Psoas muscle (tissue), 8 donors: ENCODE measurements at regions of chr3 and their contacts with region 1.

Region 1: GRCh38 chr3:160754855-160755747 is 930 bp upstream of the PPM1L start:
- DNase-seq: peak; percentile 94 to 96
- ATAC-seq: peak; percentile 85 to 94 (median 91)
- H3K4me3 ChIP-seq: peak overlapping the region; percentile 89
- H3K27ac ChIP-seq: peak overlapping the region; percentile 89
- H3K4me1 ChIP-seq: peaks cover 17% of the 10 kb centered on the region
- H3K27me3 ChIP-seq: no peaks in the 10 kb centered on the region
- CTCF ChIP-seq: no peak

Region 2: GRCh38 chr3:160707187-160707794 is 47.8 kb before region 1 on chr3:
- intact Hi-C with region 1: loop called (anchors 5 kb)
- DNase-seq: no peak
- ATAC-seq: peak; percentile 76 to 98 (median 84)
- H3K4me3 ChIP-seq: no peak overlapping the region
- H3K27ac ChIP-seq: no peak overlapping the region
- H3K4me1 ChIP-seq: no peaks in the 10 kb centered on the region
- H3K27me3 ChIP-seq: no peaks in the 10 kb centered on the region
- CTCF ChIP-seq: peak; percentile 75

Region 3: DNA sequence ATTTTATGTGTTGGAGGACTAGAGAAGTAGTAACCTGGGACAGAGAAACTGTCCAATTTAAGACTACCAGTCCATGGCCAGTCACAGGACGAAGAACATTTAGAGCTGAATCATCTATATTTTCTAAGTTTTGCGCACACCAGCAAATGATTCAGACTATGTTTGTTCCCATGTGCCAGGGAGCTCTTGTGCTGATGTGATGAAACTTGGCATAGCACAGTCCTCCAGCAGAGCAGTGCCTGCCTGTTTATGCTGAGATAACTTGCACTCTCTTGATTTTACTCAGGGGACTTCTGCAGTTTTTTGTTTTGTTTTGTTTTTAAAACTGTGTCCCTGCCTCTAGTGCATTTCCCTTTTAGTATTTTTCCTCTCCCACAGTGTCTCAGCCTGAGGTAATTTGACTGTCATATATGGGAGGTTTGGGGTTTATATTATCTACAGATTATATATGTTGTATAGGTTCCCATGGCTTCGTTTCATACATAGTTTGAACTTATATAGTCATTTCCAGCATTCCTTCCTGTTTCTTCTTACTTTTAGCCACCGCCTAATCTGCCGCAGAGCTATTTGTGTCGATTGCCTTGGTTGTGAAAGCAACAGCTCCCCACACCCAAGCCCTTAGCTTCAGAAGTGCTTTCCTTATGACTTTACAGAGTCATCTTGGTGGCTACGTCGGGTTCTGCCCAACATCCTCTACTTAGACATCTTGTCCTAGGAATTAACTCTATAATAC is 46.5 kb after region 1 on chr3:
- intact Hi-C with region 1: loop called (anchors 5 kb)
- DNase-seq: peak; percentile 37 to 77
- ATAC-seq: peak; percentile 86 to 90 (median 88)
- H3K4me3 ChIP-seq: peak overlapping the region; percentile 50
- H3K27ac ChIP-seq: peak overlapping the region; percentile 93
- H3K4me1 ChIP-seq: peaks cover 70% of the 10 kb centered on the region
- H3K27me3 ChIP-seq: no peaks in the 10 kb centered on the region
- CTCF ChIP-seq: no peak

Region 4: DNA sequence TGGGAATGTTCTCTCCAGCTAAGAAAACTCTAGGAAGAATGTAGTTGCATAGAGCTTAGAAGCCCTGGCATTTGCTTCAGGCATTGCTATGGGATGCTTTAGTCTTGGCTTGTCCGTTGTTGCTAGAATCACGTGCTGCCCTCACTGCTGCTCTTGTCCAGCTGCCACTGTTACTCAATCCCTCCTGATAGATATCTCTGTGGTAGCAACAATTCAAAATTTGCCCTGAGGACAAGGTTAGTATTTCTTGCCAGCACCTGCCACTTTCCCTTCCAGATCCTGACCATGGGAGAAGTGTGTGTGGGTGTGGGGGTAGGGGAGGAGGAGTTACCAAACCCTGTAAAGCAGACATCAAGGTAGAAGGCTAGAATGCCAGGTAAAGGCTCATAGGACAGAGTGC is 114.7 kb after region 1 on chr3:
- intact Hi-C with region 1: loop called in 1 of 2 experiments (anchors 5 kb)
- DNase-seq: peak; percentile 39 to 75
- ATAC-seq: peak; percentile 92 to 95 (median 94)
- H3K4me3 ChIP-seq: peak overlapping the region; percentile 61
- H3K27ac ChIP-seq: peak overlapping the region; percentile 94
- H3K4me1 ChIP-seq: peaks cover 61% of the 10 kb centered on the region
- H3K27me3 ChIP-seq: no peaks in the 10 kb centered on the region
- CTCF ChIP-seq: no peak

Region 5: DNA sequence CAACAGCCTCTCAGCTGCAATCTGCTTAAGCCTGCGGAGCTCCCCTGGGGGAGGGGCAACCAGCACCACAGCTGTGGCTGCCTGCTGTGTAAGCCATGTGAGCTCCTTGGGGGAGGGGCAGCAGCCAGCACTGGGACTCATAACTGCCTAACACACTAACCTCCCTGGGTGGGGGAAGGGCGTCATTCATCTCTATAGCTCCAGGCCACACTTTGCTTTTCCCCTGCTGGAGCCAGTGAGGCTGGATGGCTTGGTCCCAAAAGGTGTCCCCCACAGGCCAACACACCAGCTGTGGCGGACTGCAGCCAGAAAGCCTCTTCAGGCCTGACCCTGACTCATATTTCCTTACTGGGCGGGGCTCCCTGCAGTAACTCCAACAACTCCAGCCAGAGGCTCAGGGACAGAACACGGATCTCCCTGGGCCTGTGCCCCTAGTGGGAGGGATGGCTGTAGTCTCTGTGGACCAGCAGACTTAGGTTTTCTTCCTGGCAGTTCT is 130.7 kb after region 1 on chr3:
- intact Hi-C with region 1: loop called (anchors 1 to 10 kb)
- DNase-seq: peak; percentile 89 to 97
- ATAC-seq: peak; percentile 94 to 97 (median 96)
- H3K4me3 ChIP-seq: peak overlapping the region; percentile 48
- H3K27ac ChIP-seq: peak overlapping the region; percentile 90
- H3K4me1 ChIP-seq: peaks cover 26% of the 10 kb centered on the region
- H3K27me3 ChIP-seq: no peaks in the 10 kb centered on the region
- CTCF ChIP-seq: peak; percentile 44

Region 6: GRCh38 chr3:160929595-160929994 is 174.5 kb after region 1 on chr3:
- intact Hi-C with region 1: loop called in 1 of 2 experiments (anchors 5 kb)
- DNase-seq: peak; percentile 30 to 76
- ATAC-seq: peak; percentile 76 to 88 (median 86)
- H3K4me3 ChIP-seq: no peak overlapping the region
- H3K27ac ChIP-seq: no peak overlapping the region
- H3K4me1 ChIP-seq: peaks cover 20% of the 10 kb centered on the region
- H3K27me3 ChIP-seq: no peaks in the 10 kb centered on the region
- CTCF ChIP-seq: peak; percentile 36

Region 7: DNA sequence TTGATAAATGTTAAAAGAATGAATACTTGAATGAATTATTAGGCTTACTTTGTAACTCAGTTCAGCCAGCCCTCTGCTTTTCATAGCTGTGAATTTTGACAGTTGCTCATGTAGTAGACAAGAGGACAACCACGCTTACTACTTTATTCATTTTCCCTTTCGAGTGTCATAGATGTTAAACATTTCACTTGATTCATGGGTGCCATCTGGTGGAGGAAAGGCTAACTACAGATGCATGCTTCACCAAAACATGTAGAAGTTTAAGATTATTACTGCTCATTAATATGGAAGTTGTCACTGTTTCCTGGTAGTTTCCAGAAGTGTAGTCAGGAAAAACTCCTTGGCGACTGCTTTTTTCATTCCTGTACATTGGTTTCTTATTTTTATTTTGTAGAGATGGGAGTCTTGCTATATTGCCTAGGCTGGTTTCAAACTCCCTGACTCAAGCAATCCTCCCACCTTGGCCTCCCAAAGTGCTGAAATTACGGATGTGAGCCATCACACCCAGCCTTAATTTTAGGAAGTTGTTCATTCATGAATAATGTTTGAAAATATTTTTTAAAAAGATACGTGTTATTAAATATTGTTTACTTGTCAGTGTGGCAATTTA is 186.9 kb after region 1 on chr3:
- intact Hi-C with region 1: loop called (anchors 5 kb)
- DNase-seq: peak in 1 of 2 donors; percentile 16
- ATAC-seq: peak; percentile 81 to 92 (median 87)
- H3K4me3 ChIP-seq: no peak overlapping the region
- H3K27ac ChIP-seq: no peak overlapping the region
- H3K4me1 ChIP-seq: peaks cover 5% of the 10 kb centered on the region
- H3K27me3 ChIP-seq: no peaks in the 10 kb centered on the region
- CTCF ChIP-seq: peak; percentile 93